Right cardiac atrium (tissue), 5 donors: ENCODE measurements at regions of chr5 and their contacts with region 1.

Region 1: DNA sequence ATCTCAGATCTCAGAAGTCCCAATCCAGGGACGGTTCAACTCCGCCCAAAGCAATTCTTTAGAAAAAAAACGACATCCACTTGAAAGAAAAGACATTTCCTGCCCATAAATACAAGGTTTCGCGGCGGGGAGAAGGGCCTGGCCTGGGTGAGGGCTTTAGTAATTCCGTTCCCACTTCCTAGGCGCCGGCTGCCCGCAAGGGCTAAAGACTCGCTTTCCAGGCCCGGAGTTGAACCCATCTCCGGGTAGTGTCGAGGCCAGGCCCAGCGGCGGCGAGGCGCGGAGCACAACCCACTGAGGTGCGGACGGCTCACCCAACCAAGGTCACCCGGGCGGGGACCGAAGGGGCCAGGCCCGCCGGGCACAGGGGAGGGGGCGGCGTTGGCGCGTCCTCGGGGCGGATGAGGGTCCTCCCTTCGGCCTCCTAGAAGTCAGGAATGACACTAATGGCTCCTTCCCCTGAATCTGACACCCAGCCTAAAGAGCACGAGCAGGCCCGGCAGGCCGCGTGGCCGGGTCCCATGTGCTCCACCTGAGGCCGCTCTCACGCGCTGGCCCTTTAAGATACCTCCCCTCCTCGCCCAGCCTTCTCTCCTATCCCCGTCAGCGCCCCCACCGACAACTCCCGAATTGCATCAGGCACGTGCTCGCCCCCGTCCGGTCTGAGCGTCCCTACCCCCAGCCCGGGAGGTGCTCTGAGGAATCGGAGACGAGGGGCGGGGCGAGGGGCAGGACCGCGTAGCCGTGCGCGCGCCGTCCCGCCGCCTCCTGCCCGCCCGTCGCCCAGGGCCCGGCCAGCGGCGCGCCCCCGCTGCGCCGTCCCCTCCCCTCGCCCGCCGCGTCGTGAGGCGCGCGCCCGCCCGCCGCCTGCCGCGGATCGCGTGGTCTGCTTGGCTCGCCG is 467 bp upstream of the LARP1 start:
- DNase-seq: peak; percentile 99 to 100 (median 100)
- ATAC-seq: peak; percentile 95 to 96
- H3K4me3 ChIP-seq: peak overlapping the region; percentile 83
- H3K27ac ChIP-seq: peak overlapping the region; percentile 99
- H3K4me1 ChIP-seq: peaks cover 4% of the 10 kb centered on the region
- H3K27me3 ChIP-seq: no peaks in the 10 kb centered on the region

Region 2: DNA sequence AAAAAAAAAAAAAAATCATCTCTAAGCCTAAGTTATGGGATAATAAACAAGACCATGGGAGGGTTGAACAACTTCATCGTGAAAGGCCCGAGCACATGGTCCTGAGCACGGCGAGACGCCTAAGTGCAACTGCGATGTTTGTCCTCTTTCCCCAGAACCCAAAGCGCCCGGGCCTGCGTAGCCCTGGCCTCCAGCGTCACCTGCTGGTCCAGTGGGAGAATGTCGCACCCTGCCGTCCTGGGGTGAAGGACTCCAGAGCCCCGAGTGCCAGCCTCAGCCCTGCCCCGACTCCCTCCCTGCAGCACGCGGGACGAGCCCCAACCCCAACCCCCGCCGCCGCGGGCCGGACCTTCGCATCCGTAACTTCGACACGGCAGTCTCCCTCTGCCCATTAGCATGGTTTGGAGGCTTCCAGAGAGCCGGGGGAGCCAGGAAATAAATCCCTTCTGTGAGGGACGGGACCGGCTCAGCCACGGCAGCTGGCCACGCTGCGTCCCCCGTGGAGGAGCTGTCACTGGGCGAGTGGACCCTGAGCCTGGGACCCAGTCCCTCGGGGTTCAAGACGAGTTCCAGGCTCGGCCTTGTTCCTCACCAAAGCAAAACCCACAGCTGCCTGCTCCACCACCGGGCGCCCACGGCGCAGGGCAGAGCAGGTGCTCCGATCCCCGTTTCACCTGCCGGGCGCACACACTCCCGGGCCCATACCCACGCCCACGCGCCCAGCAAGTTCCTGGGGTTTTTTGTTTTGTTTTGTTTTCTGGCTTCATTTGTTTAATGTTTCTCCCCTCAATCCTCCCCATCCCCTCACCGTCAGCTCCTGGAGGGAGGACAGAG is 144.2 kb before region 1 on chr5:
- intact Hi-C with region 1: no loop called
- DNase-seq: peak; percentile 75 to 87 (median 87)
- ATAC-seq: peak; percentile 90 to 94
- H3K4me3 ChIP-seq: peak overlapping the region; percentile 26
- H3K27ac ChIP-seq: no peak overlapping the region
- H3K4me1 ChIP-seq: no peaks in the 10 kb centered on the region
- H3K27me3 ChIP-seq: no peaks in the 10 kb centered on the region

Region 3: DNA sequence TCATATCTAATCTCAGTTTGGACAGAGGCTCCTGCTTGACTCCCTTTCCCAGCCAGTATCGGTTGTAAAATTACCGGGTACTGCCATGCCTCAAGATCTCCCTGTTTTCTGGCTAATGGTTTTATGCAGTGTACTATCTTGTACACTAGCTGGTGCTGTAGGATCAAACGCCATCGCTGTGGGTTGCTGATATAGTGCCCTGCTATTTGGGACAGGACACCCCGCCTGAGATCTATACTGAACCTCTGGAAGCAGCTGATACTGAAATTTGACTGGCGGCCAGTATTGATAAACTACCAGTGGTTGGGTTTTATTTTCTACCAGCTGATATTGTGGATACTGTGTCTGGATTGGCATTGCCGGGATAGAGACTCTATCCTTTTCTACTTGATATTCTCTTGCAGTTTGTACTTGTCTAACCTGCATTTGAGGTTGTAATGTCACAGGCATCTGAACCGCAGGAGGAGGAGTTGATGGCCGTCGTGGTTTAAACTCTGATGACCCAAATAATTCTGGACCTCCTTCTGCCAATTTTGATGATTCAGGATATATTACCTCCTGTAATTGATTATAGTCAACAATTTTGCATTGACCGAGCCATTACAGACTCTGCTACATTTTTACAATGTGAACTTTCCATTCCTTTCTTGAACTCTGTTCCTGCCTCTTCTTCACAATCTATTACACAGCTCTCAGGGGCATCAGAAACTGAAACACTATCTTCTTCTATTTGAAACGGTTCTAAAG is 112.0 kb before region 1 on chr5:
- intact Hi-C with region 1: no loop called
- DNase-seq: no peak
- ATAC-seq: peak; percentile 66 to 91
- H3K4me3 ChIP-seq: no peak overlapping the region
- H3K27ac ChIP-seq: no peak overlapping the region
- H3K4me1 ChIP-seq: no peaks in the 10 kb centered on the region
- H3K27me3 ChIP-seq: no peaks in the 10 kb centered on the region

Region 4: DNA sequence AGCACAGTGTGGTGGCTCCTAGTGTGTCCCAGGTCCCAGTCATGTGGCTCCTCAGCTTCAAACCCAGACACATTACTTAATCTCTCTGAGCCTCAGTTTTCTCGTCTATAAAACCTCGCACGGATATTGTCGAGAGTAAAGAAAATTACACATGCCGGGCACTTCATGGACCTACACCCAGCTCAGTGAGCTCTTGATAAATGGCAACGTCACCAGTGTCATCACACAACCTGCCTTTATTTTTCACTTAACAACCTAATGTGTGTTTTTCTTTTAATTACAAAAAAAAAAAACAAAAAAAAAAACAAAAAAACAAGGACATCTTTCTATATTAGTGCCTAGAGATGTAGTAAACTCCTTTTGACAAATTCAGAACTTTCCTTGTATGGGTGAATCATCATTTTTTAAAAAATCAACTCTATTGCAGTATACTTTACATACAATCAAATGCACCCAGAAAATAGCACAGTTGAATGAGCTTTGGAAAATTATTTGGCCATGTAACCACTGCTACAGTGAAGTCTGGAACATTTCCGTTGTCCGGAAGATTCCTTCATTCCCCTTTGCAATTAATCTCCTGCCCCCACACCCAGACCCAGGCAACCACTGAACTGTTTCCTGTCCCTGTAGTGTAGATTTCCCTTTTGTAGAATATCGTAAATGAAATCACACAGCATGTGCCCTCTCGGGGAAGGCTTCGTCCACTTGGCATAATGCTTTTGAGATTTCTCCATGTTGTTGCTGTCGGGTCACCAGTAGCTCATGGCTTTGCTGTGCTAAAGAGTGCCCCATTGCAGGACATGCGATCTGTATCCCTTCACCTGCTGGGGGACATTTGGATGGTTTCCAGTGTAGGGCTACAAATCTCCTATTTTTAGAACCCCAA is 100.0 kb before region 1 on chr5:
- intact Hi-C with region 1: loop called in 1 of 4 experiments (anchors 5 kb)
- DNase-seq: no peak
- ATAC-seq: peak; percentile 12 to 28
- H3K4me3 ChIP-seq: peak overlapping the region; percentile 0
- H3K27ac ChIP-seq: peak overlapping the region; percentile 61
- H3K4me1 ChIP-seq: peaks cover 8% of the 10 kb centered on the region
- H3K27me3 ChIP-seq: no peaks in the 10 kb centered on the region

Region 5: DNA sequence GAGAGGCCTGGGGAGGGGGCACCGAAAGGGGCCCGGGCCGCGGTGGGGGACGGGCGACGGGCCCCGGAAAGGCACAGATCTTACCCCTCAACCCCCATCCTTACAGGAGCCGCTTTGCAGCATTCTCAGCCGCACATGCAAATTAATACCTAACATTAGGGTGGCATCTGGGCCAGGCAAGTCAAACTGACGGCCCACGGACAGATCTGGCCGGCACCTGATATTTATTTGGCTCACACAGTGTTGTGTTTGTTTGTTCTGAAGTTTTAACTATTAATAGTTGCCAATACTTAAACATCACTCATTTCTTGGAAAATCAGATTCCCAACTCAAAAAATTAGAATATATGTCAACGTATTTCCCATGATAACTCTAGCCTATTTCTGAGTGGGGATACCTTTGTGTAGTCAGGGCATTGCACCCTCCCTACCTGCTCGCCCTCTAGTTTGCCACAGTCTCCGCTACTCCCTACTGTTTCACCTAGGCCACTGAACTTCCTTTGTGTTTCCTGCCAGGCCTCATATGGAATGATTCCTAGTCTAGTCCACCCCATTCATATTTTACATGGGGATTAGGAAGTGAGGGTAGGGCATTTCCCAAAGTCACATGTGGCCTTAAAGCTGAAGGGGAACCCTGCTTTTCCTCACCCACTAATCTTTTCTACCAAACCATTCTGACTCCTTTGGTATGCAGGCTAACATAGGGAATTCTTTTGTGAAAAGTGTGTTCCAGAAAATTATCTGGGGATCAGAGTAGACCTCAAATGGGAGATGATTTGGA is 71.4 kb before region 1 on chr5:
- intact Hi-C with region 1: loop called in 2 of 4 experiments (anchors 5 to 10 kb)
- DNase-seq: no peak
- ATAC-seq: no peak
- H3K4me3 ChIP-seq: peak overlapping the region; percentile 52
- H3K27ac ChIP-seq: peak overlapping the region; percentile 84
- H3K4me1 ChIP-seq: peaks cover 3% of the 10 kb centered on the region
- H3K27me3 ChIP-seq: no peaks in the 10 kb centered on the region

Region 6: DNA sequence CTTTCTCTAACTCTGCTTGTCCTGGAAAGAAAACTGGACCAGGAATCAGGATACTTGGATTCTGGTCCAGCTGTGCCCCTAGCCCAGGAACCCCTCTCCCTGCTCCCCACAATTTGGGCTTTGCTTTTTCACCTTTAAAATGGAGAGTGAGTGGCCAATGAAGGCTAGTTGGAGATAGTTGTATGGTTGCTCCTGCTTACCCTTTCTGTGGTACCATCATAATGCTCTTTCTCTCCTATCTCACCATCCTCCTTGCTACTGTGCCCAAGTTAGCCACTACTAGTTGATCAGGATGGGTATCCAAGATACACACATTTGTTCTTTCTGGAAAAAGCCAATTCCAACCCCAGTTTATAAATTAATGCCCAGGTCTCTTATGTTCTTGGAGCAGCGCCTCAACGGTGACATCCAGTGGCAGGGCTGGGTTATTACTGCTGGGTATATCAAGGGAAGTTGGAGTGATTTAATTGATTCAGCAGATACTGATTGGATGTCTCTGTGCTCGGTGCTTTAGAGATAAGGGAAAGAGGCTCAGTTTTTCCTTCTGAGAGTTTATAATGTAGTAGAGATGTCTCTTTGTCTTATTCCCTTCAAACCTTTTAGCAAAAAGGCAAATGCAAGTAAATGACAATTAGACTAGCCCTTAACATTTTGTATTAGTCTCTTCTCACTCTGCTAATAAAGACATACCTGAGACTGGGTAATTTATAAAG is 57.1 kb after region 1 on chr5:
- intact Hi-C with region 1: loop called in 1 of 4 experiments (anchors 10 kb)
- DNase-seq: peak; percentile 44 to 81 (median 77)
- ATAC-seq: peak; percentile 42 to 63
- H3K4me3 ChIP-seq: no peak overlapping the region
- H3K27ac ChIP-seq: no peak overlapping the region
- H3K4me1 ChIP-seq: no peaks in the 10 kb centered on the region
- H3K27me3 ChIP-seq: no peaks in the 10 kb centered on the region

Region 7: DNA sequence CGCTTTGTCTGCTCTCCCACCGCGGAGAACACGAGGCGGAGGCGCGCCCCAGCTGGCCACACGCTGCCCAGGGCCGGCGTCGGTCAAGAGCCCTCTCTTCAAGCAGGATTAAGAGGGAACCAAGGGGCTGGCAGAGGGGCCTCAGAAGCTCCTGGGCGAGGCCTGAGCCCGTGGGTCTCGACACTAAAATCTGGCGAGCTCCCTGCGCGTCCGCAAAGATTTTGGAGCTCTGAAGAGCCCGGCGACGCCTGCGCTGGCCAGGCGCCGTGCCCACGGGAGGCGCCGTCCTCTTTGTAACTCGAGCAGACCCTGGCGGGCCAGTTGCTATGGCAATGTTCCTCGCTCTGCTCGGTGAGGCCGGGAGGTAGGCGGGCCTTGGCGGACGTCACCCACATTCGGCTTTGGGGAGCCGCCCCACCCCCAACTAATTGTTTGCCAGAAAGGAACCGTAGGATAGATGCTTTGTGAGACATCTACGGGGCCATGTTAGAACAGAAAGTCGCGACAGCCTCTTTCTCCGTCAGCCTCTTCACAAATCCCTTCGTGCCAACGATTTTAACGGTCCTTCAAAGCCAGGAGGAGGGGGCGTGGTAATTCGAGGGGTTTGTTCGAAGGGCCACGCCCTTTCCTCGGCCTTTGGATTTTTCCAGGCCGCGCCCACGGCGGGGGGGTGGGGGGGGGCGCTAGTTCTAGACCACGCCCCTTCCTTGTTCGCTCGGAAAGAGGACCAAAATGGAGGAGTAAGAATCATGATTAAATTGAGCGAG is 103.0 kb after region 1 on chr5:
- intact Hi-C with region 1: loop called in 1 of 4 experiments (anchors 5 kb)
- DNase-seq: peak; percentile 98 to 99 (median 98)
- ATAC-seq: peak; percentile 90 to 91
- H3K4me3 ChIP-seq: peak overlapping the region; percentile 88
- H3K27ac ChIP-seq: peak overlapping the region; percentile 97
- H3K4me1 ChIP-seq: peaks cover 4% of the 10 kb centered on the region
- H3K27me3 ChIP-seq: no peaks in the 10 kb centered on the region